Mammary epithelial cell (primary cell): ENCODE measurements at regions of chr5 and their contacts with region 1.

Region 1: DNA sequence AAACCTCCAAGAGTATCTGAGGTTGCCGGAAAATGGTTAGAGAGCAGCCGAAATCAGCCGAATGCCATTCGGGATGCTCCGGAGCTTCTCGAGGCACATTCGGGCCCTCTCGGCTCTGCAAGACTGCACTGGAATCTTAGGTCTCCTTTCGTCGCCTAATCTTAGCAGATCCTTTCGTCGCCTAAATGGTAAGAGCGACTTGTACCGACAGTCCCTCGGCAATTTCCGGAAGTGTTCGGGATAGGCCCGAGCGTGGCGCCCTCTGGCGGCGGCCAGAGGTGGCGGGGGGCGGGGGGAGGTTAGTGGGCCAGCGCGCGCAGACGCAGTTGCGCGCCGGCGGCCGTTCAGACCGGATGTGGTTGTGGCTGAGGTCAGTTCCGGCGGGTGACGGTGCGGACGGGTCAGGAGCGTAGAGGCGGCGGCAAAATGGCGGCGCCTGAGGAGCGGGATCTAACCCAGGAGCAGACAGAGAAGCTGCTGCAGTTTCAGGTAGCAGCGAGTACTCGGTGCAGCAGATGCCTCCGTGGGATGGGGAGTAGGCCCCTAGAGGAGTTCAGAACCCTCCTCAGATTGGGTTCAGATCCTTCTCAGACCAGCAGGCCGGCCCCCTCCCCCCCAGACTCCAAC is at the start of gene FAF2:
- DNase-seq: peak; percentile 98
- H3K4me3 ChIP-seq: peak within 1 kb of the TSS; percentile 66 to 90 (median 82)
- H3K27ac ChIP-seq: peak within 1 kb of the TSS; percentile 85
- H3K4me1 ChIP-seq: peaks cover 5% of the 10 kb centered on the region
- H3K27me3 ChIP-seq: no peaks in the 10 kb centered on the region
- CTCF ChIP-seq: peak; percentile 93 to 98
- total RNA-seq, gene FAF2: 48.5 to 58.8 TPM

Region 2: DNA sequence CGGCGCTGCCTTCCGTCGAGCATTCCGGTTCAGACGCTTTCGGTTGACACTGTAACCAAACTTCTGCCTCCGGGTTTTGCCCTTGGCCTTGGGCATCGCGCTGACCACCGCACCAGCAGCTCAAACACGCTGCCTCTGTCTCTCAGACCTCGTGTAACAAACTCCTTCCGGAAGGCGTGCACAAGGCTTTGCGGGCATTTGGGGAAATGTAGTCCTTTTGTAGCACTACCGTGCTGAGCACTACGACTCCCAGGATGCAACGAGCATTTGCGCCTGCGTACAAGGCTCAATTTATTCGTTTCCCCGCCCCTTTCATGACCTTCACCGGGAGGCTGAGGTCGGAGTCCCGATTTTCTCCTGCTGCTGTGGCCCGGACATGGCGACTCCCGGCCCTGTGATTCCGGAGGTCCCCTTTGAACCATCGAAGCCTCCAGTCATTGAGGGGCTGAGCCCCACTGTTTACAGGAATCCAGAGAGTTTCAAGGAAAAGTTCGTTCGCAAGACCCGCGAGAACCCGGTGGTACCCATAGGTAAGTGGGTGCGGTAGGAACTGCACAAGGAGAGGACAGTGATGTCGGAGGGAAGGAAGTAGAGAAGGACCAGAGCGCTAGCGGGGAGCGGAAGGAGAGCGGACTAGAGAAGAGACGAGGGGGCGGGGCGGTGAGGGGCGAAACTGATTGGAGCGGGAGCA is 59.5 kb before region 1 on chr5 and contains the starts of genes HIGD2A and NOP16:
- CTCF ChIA-PET with region 1: no interaction called
- dilution Hi-C with region 1: no loop called
- in situ Hi-C with region 1: no loop called
- intact Hi-C with region 1: loop called (anchors 2 kb)
- DNase-seq: peak; percentile 98
- H3K4me3 ChIP-seq: peak within 1 kb of the TSS; percentile 67 to 79 (median 75)
- H3K27ac ChIP-seq: peak within 1 kb of the TSS; percentile 90
- H3K4me1 ChIP-seq: peaks cover 12% of the 10 kb centered on the region
- H3K27me3 ChIP-seq: no peaks in the 10 kb centered on the region
- CTCF ChIP-seq: no peak
- total RNA-seq, gene HIGD2A: 30.3 to 93.0 TPM
- total RNA-seq, gene NOP16: 8.7 to 61.4 TPM

Region 3: GRCh38 chr5:176481711-176482110 is 33.6 kb after region 1 on chr5:
- CTCF ChIA-PET with region 1: interaction called, 11 read pairs
- dilution Hi-C with region 1: no loop called
- in situ Hi-C with region 1: no loop called
- intact Hi-C with region 1: no loop called
- DNase-seq: no peak
- H3K4me3 ChIP-seq: no peak overlapping the region
- H3K27ac ChIP-seq: no peak overlapping the region
- H3K4me1 ChIP-seq: no peaks in the 10 kb centered on the region
- H3K27me3 ChIP-seq: no peaks in the 10 kb centered on the region
- CTCF ChIP-seq: no peak

Region 4: DNA sequence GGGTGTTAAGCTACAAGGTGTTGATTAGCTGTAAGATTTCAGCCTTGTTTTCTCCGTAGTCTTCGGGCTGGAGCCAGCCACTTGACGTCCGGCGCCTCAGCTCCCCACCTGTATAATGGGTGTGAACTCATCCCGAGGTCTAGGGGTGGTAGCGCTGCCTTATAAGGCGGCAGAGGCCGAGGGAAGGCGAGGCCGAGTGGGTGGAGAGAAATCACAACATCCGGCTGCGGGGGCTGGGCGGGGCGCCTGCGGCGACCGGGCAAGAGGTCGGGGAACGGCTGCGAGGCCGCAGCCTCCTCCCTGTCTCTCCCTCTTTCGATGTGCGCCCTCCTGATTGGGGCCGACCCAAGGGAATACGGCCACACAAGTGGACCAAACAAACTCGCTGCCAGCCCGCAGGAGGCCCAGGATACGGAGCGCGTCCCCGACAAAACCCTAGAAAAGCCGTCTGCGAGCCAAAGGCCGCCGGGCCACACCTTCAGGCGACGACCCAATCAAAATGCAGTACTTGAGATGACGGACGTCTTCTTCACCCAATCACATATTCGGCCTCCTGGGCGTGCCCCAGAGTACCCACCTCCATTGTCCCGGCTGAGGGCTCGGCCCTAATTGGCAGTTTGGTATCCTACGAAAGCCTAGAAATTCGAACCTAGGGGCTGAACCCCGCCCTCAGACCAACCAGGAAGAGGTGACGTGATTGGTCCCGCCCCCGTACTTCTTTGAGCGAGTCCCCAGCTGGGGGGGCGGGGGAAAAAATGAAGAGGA is 977.9 kb after region 1 on chr5:
- CTCF ChIA-PET with region 1: interaction called, 13 read pairs
- dilution Hi-C with region 1: no loop called
- in situ Hi-C with region 1: no loop called
- intact Hi-C with region 1: no loop called
- DNase-seq: peak; percentile 100
- H3K4me3 ChIP-seq: peak overlapping the region; percentile 51 to 68 (median 54)
- H3K27ac ChIP-seq: peak overlapping the region; percentile 71
- H3K4me1 ChIP-seq: peaks cover 31% of the 10 kb centered on the region
- H3K27me3 ChIP-seq: no peaks in the 10 kb centered on the region
- CTCF ChIP-seq: no peak